ENCODE measurements at regions of chr2 and their contacts with region 1.

Region 1: DNA sequence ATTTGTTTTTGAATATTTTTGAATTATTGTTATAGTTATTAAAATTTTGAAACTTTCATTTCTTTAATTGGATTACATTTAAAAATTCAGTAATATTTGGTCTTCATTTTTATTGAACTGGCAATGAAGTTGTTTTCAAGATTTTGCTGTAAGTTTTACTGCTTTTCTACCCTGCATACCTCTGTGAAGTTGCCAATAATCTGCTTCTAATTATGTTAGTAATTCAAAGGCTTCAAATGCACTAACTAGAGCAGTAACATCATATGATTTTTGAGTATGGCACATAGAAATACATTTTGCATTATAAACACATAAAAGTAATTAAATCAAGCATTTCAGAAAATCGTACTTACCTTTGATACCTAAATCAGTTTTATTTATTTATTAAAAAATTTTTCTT is 40.3 kb upstream of the FAM171B start:
- DNase-seq: no peak
- H3K4me3 ChIP-seq: no peak overlapping the region
- H3K27ac ChIP-seq: no peak overlapping the region
- H3K4me1 ChIP-seq: no peaks in the 10 kb centered on the region
- H3K27me3 ChIP-seq: no peaks in the 10 kb centered on the region
- CTCF ChIP-seq: no peak
- EP300 ChIP-seq: no peak
- POLR2A ChIP-seq: no peak

Region 2: GRCh38 chr2:186496401-186496800 is 157.1 kb before region 1 on chr2:
- intact Hi-C with region 1: loop called in 1 of 4 experiments (anchors 5 kb)
- DNase-seq: no peak
- H3K4me3 ChIP-seq: no peak overlapping the region
- H3K27ac ChIP-seq: no peak overlapping the region
- H3K4me1 ChIP-seq: no peaks in the 10 kb centered on the region
- H3K27me3 ChIP-seq: no peaks in the 10 kb centered on the region
- CTCF ChIP-seq: no peak
- EP300 ChIP-seq: no peak
- POLR2A ChIP-seq: no peak

Region 3: DNA sequence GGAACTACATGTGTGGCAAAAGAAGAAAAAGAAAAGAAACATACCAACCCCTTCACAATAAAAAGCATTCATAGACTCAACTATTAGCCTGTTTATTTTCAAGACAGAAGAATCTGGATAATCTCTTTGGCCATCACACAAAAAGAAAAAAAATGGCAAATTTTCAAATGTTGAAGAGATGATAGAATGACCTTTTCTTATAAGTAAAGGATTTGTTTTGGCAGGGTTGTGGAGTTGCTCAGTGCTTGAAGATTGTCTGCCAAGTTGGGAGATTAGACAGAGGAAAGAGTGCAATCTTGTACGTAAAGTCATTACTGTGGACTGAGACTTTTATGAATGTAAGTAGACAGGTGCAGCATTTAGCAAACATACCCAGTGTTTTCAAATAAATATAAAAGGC is 21.9 kb after region 1 on chr2:
- intact Hi-C with region 1: no loop called
- DNase-seq: no peak
- H3K4me3 ChIP-seq: no peak overlapping the region
- H3K27ac ChIP-seq: no peak overlapping the region
- H3K4me1 ChIP-seq: no peaks in the 10 kb centered on the region
- H3K27me3 ChIP-seq: no peaks in the 10 kb centered on the region
- CTCF ChIP-seq: no peak
- EP300 ChIP-seq: no peak
- POLR2A ChIP-seq: no peak